GM10248 (cell line): ENCODE measurements at regions of chr18 and their contacts with region 1.

Region 1: DNA sequence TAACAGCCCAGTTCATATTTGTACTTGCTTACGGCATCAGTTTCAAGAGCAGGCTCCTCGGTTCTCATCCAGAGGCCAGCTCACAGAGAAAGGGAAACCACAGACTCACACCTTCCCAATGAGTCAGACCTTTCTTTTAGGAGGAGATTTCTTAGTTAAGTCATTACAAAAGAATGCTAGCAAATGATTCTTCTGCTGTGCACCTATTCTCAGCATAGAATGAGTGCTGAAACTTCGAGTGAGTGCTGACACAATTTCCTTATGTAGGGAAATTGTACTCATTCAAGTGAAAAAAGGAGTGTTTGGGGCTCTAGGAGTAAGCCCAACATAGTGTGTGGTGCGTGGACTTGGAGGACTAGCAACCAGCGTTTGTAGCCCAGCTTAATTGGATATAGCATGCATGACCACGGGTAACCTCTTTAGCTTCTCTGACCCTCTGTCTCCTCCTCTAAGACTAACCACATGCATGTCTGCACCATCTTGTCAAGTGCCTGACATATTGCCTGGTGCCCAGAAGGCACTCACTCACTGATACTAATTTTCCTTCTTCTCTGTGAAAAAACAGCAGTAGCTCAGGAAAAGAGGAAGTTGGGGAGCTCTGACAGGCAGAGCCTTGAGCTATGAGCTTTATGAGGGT is 87.0 kb downstream of the ALPK2 start:
- DNase-seq: peak; percentile 54
- CTCF ChIP-seq: no peak

Region 2: GRCh38 chr18:58552057-58552461 is 10.2 kb after region 1 on chr18:
- CTCF ChIA-PET with region 1: interaction called, 34 read pairs
- POLR2A ChIA-PET with region 1: interaction called, 3 read pairs
- DNase-seq: peak; percentile 58
- CTCF ChIP-seq: no peak

Region 3: GRCh38 chr18:58565021-58565420 is 23.1 kb after region 1 on chr18:
- CTCF ChIA-PET with region 1: interaction called, 24 read pairs
- POLR2A ChIA-PET with region 1: interaction called, 22 read pairs
- DNase-seq: peak; percentile 61
- CTCF ChIP-seq: no peak

Region 4: GRCh38 chr18:58671111-58671631 is 129.3 kb after region 1 on chr18 and contains the start of gene MALT1:
- CTCF ChIA-PET with region 1: interaction called, 36 read pairs
- POLR2A ChIA-PET with region 1: interaction called, 6 read pairs
- DNase-seq: peak; percentile 95
- CTCF ChIP-seq: no peak